ENCODE measurements at regions of chr16 and their contacts with region 1.

Region 1: DNA sequence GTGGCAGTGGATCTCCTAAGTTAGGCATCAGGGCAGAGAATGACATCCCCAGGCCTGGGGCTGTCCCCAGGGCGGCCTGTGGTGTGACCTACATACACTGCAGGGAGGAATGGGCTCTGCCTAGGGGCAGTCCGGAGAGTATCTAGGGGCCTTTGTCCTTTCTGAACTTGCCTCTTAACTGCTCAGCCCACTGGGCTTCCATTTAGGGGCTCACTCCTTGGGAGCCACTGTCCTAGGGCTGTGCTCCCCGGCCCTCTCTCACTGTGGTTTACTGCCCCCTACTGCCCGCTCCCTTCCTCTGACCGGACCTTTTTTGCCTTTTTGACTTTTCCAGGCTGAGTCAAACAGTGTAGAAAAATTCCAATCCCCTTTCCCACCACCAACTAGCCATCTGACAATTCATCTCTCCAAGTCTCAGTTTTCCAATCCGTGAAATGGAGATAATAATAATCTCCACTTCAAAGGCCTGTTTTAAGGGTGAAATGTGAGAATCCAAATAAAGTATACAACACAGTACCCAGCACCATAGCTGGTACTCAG is 66.8 kb downstream of the DNAH3 start:
- DNase-seq: peak; percentile 54
- ATAC-seq: peak; percentile 93
- H3K4me3 ChIP-seq: no peak overlapping the region
- H3K27ac ChIP-seq: no peak overlapping the region
- H3K4me1 ChIP-seq: no peaks in the 10 kb centered on the region
- H3K27me3 ChIP-seq: no peaks in the 10 kb centered on the region
- CTCF ChIP-seq: peak; percentile 80
- POLR2A ChIP-seq: no peak
- RAD21 ChIP-seq: peak; percentile 81

Region 2: GRCh38 chr16:20806168-20807050 is 277.4 kb before region 1 on chr16 and contains the starts of genes ERI2 and REXO5:
- CTCF ChIA-PET with region 1: no interaction called
- POLR2A ChIA-PET with region 1: no interaction called
- dilution Hi-C with region 1: no loop called
- in situ Hi-C with region 1: no loop called
- intact Hi-C with region 1: loop called (anchors 5 kb)
- DNase-seq: peak; percentile 94
- ATAC-seq: peak; percentile 90
- H3K4me3 ChIP-seq: peak within 1 kb of the TSS; percentile 62
- H3K27ac ChIP-seq: peak within 1 kb of the TSS; percentile 73
- H3K4me1 ChIP-seq: no peaks in the 10 kb centered on the region
- H3K27me3 ChIP-seq: no peaks in the 10 kb centered on the region
- CTCF ChIP-seq: peak; percentile 53
- POLR2A ChIP-seq: peak; percentile 79
- RAD21 ChIP-seq: peak; percentile 3; the same call in 1 of the 2 replicates
- total RNA-seq, gene ERI2: 10.2 and 15.0 TPM in 2 replicates
- total RNA-seq, gene REXO5: 6.1 and 7.0 TPM in 2 replicates

Region 3: GRCh38 chr16:21023509-21024202 is 60.1 kb before region 1 on chr16:
- CTCF ChIA-PET with region 1: no interaction called
- POLR2A ChIA-PET with region 1: no interaction called
- dilution Hi-C with region 1: no loop called
- in situ Hi-C with region 1: no loop called
- intact Hi-C with region 1: no loop called
- DNase-seq: no peak
- ATAC-seq: no peak
- H3K4me3 ChIP-seq: no peak overlapping the region
- H3K27ac ChIP-seq: no peak overlapping the region
- H3K4me1 ChIP-seq: no peaks in the 10 kb centered on the region
- H3K27me3 ChIP-seq: no peaks in the 10 kb centered on the region
- CTCF ChIP-seq: no peak
- POLR2A ChIP-seq: no peak
- RAD21 ChIP-seq: no peak